Sigmoid colon (tissue), 7 donors: ENCODE measurements at regions of chr15 and their contacts with region 1.

Region 1: DNA sequence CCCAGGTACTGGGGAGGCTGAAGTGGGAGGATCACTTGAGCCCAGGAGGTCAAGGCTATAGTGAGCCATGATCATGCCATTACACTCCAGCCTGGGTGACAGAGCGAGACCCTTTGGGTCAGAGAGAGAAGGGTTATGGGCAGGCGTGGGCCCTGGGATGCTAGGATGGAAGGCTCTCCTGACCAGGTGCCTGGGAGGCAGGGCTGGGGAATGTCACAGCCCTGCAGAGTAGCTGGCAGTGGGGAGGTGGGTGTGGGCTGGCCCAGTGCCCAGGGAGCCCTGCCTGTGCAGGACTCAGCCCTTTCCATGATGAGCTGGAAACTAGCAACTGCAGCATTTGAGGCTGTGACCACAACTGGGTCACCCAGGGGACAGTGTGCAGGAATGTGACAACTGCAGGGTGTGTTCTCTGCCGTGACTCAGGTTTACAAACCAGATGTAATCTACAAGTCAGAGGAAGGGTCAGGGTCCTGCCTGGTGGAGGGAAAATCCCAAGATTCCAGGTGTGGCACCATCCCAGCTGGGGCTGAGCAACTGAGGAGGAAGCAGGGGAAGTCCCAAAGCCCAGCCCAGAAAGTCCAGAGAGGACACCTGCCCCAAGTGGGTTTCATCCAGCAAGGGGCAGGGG is 45.4 kb downstream of the SLC28A1 start:
- DNase-seq: no peak
- H3K4me3 ChIP-seq: no peak overlapping the region
- H3K27ac ChIP-seq: no peak overlapping the region
- H3K4me1 ChIP-seq: peaks cover 0 to 8% (median 7%) of the 10 kb centered on the region in 4 donors
- H3K27me3 ChIP-seq: no peaks in the 10 kb centered on the region
- CTCF ChIP-seq: no peak
- EP300 ChIP-seq: no peak
- POLR2A ChIP-seq: no peak

Region 2: GRCh38 chr15:84588053-84588874 is 341.6 kb before region 1 on chr15:
- intact Hi-C with region 1: loop called (anchors 1 kb)
- DNase-seq: peak; percentile 91
- H3K4me3 ChIP-seq: peak overlapping the region in 3 of 4 donors; percentile 29 to 38 (median 34)
- H3K27ac ChIP-seq: peak overlapping the region in 1 of 4 donors; percentile 3
- H3K4me1 ChIP-seq: peaks cover 0 to 9% (median 6%) of the 10 kb centered on the region in 4 donors
- H3K27me3 ChIP-seq: no peaks in the 10 kb centered on the region
- CTCF ChIP-seq: peak; percentile 47 to 99 (median 50)
- EP300 ChIP-seq: no peak
- POLR2A ChIP-seq: no peak

Region 3: DNA sequence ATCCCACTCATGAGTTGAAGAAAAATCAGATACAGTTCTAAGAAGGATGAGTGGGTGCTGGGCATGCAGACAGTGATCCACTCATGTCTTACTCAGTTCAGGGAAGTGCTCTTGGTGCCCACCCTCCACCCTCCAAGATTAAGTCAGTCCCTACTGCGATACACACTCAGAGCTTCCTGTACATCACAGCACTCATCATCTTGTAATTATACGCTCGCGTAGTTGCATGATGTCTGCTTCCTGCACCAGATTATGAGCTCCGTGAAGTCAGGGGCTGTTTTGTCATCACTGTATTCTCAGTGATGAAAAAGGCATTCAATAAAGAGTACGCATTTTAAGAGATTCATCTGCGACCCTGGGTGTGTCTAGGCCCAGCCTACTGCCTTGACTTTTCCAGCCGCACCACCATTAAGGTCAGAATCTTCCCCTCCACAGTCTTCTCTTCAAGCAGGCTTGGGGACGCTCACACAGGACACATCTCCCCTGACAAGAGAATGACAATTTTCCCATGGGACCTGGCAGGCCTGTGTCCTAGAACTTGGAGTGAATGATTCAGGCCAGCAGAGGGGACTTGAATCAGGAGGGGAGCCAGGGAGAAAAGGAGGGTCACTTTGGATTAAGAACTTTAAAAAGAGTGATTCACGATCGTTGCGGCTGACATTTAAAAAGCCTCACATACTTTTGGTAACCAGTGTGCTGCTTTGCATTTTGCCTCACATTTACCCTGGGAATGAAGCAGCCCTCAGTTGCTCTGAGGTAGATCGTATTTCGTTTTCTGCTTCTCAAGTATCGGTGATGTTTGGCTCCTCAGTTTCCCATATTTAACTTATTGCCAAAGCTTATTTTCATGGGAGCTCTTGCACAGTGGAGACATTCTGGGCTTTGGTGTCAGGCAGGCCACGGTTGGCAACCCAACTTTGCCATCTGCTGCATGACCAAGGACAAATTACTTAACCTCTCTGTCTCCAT is 43.9 kb after region 1 on chr15:
- intact Hi-C with region 1: no loop called
- DNase-seq: no peak
- H3K4me3 ChIP-seq: no peak overlapping the region
- H3K27ac ChIP-seq: no peak overlapping the region
- H3K4me1 ChIP-seq: no peaks in the 10 kb centered on the region
- H3K27me3 ChIP-seq: no peaks in the 10 kb centered on the region
- CTCF ChIP-seq: no peak
- EP300 ChIP-seq: no peak
- POLR2A ChIP-seq: no peak